ENCODE measurements at regions of chr12 and their contacts with region 1.

Region 1: GRCh38 chr12:42332301-42333285 is 6.6 kb downstream of the PPHLN1 start:
- DNase-seq: peak in 7 of 9 donors; percentile 12 to 54 (median 42)
- ATAC-seq: peak; percentile 77
- H3K4me3 ChIP-seq: no peak overlapping the region
- H3K4me3 Mint-ChIP-seq: peak overlapping the region in 3 of 10 donors; percentile 7 to 30 (median 14)
- H3K27ac ChIP-seq: no peak overlapping the region
- H3K27ac Mint-ChIP-seq: peak overlapping the region in 1 of 9 donors; percentile 2
- H3K4me1 ChIP-seq: peaks cover 5 to 31% of the 10 kb centered on the region in 2 donors
- H3K4me1 Mint-ChIP-seq: peaks cover 47 to 87% (median 73%) of the 10 kb centered on the region in 7 donors
- H3K27me3 ChIP-seq: no peaks in the 10 kb centered on the region
- H3K27me3 Mint-ChIP-seq: no peaks in the 10 kb centered on the region

Region 2: DNA sequence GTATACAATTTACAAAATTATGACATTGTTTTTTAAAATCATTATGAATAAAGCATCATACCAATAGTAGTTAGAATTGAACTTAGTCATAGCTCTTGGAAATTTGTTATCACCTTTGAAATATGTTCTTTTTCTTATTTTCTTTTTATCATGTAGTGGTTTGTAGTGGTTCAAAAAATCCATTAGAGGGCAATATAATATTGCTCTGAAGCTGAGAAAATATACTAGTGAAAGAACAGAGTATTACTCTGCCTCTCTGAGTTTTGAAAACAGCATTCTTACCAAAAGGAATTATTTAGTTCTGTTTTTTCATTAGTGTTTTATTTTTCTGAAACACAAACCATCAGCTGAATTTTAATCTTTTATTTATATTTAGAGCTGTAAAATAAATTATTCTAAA is 1068.3 kb before region 1 on chr12:
- CTCF ChIA-PET with region 1: no interaction called
- POLR2A ChIA-PET with region 1: no interaction called
- intact Hi-C with region 1: loop called in 1 of 2 experiments (anchors 5 kb)
- DNase-seq: no peak
- ATAC-seq: no peak
- H3K4me3 ChIP-seq: no peak overlapping the region
- H3K4me3 Mint-ChIP-seq: no peak overlapping the region
- H3K27ac ChIP-seq: no peak overlapping the region
- H3K27ac Mint-ChIP-seq: no peak overlapping the region
- H3K4me1 ChIP-seq: no peaks in the 10 kb centered on the region
- H3K4me1 Mint-ChIP-seq: no peaks in the 10 kb centered on the region
- H3K27me3 ChIP-seq: no peaks in the 10 kb centered on the region
- H3K27me3 Mint-ChIP-seq: peaks cover 0 to 13% (median 6%) of the 10 kb centered on the region in 5 donors

Region 3: GRCh38 chr12:42129595-42130204 is 202.9 kb before region 1 on chr12:
- CTCF ChIA-PET with region 1: interaction called, 5 read pairs
- POLR2A ChIA-PET with region 1: no interaction called
- intact Hi-C with region 1: loop called (anchors 1 kb)
- DNase-seq: peak in 6 of 9 donors; percentile 23 to 44 (median 30)
- ATAC-seq: peak; percentile 61
- H3K4me3 ChIP-seq: no peak overlapping the region
- H3K4me3 Mint-ChIP-seq: no peak overlapping the region
- H3K27ac ChIP-seq: no peak overlapping the region
- H3K27ac Mint-ChIP-seq: peak overlapping the region in 1 of 9 donors; percentile 29
- H3K4me1 ChIP-seq: no peaks in the 10 kb centered on the region
- H3K4me1 Mint-ChIP-seq: peaks cover 9 to 57% (median 36%) of the 10 kb centered on the region in 7 donors
- H3K27me3 ChIP-seq: no peaks in the 10 kb centered on the region
- H3K27me3 Mint-ChIP-seq: no peaks in the 10 kb centered on the region